Panc1 (cell line): ENCODE measurements at regions of chr5 and their contacts with region 1.

Region 1: GRCh38 chr5:138128334-138128733 is 10.9 kb downstream of the NME5 start:
- DNase-seq: no peak
- ATAC-seq: no peak; the same call in 1 of the 2 replicates
- H3K4me3 ChIP-seq: no peak overlapping the region
- H3K27ac ChIP-seq: no peak overlapping the region
- H3K4me1 ChIP-seq: peaks cover 4% of the 10 kb centered on the region; the same call in 1 of the 2 replicates
- H3K27me3 ChIP-seq: no peaks in the 10 kb centered on the region
- CTCF ChIP-seq: no peak

Region 2: GRCh38 chr5:138018844-138019243 is 109.5 kb before region 1 on chr5:
- CTCF ChIA-PET with region 1: no interaction called
- POLR2A ChIA-PET with region 1: no interaction called
- in situ Hi-C with region 1: no loop called
- intact Hi-C with region 1: no loop called
- DNase-seq: no peak
- ATAC-seq: no peak
- H3K4me3 ChIP-seq: no peak overlapping the region
- H3K27ac ChIP-seq: no peak overlapping the region
- H3K4me1 ChIP-seq: no peaks in the 10 kb centered on the region
- H3K27me3 ChIP-seq: no peaks in the 10 kb centered on the region
- CTCF ChIP-seq: no peak

Region 3: DNA sequence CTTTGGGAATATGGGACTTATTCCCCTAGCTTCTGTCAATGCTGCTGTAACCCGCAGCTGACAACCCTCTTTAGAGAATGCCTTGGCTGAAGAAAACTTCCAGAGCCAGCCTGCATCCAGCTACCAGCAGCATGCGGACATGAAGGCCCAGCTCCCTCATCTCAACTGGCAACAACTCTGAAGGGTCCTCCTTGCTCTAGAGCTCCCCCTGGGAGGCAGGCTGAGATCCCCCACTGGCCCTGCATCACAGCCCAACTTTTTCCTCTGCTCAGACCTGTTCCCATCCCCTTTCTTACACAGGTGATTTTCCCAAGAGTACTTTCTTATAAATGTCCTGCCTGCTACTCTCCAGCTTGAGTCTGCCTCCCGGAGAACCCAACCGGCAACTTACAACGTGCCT is 63.2 kb before region 1 on chr5:
- CTCF ChIA-PET with region 1: interaction called, 10 read pairs
- POLR2A ChIA-PET with region 1: no interaction called
- in situ Hi-C with region 1: no loop called
- intact Hi-C with region 1: no loop called
- DNase-seq: no peak
- ATAC-seq: no peak
- H3K4me3 ChIP-seq: no peak overlapping the region
- H3K27ac ChIP-seq: no peak overlapping the region
- H3K4me1 ChIP-seq: no peaks in the 10 kb centered on the region
- H3K27me3 ChIP-seq: no peaks in the 10 kb centered on the region
- CTCF ChIP-seq: peak; percentile 69

Region 4: GRCh38 chr5:138077065-138077696 is 51.2 kb before region 1 on chr5:
- CTCF ChIA-PET with region 1: interaction called, 19 read pairs
- POLR2A ChIA-PET with region 1: interaction called, 3 read pairs
- in situ Hi-C with region 1: no loop called
- intact Hi-C with region 1: loop called (anchors 1 kb)
- DNase-seq: peak; percentile 66
- ATAC-seq: peak; percentile 92
- H3K4me3 ChIP-seq: no peak overlapping the region
- H3K27ac ChIP-seq: no peak overlapping the region; the same call in 1 of the 2 replicates
- H3K4me1 ChIP-seq: no peaks in the 10 kb centered on the region
- H3K27me3 ChIP-seq: no peaks in the 10 kb centered on the region
- CTCF ChIP-seq: peak; percentile 85

Region 5: GRCh38 chr5:138110266-138110963 is 17.9 kb before region 1 on chr5:
- CTCF ChIA-PET with region 1: no interaction called
- POLR2A ChIA-PET with region 1: interaction called, 14 read pairs
- in situ Hi-C with region 1: no loop called
- intact Hi-C with region 1: no loop called
- DNase-seq: no peak
- ATAC-seq: peak; percentile 51; the same call in 1 of the 2 replicates
- H3K4me3 ChIP-seq: no peak overlapping the region
- H3K27ac ChIP-seq: no peak overlapping the region
- H3K4me1 ChIP-seq: peaks cover 3% of the 10 kb centered on the region; the same call in 1 of the 2 replicates
- H3K27me3 ChIP-seq: no peaks in the 10 kb centered on the region
- CTCF ChIP-seq: no peak

Region 6: GRCh38 chr5:138824924-138825863 is 696.9 kb after region 1 on chr5:
- CTCF ChIA-PET with region 1: no interaction called
- POLR2A ChIA-PET with region 1: no interaction called
- in situ Hi-C with region 1: no loop called
- intact Hi-C with region 1: no loop called
- DNase-seq: no peak
- ATAC-seq: peak; percentile 63; the same call in 1 of the 2 replicates
- H3K4me3 ChIP-seq: no peak overlapping the region
- H3K27ac ChIP-seq: no peak overlapping the region
- H3K4me1 ChIP-seq: no peaks in the 10 kb centered on the region
- H3K27me3 ChIP-seq: no peaks in the 10 kb centered on the region
- CTCF ChIP-seq: peak; percentile 73; the same call in 1 of the 2 replicates